Activated CD4-positive, alpha-beta T cell treated with anti-CD3 and anti-CD28 coated beads for 36 hours (primary cell): ENCODE measurements at regions of chr5 and their contacts with region 1.

Region 1: GRCh38 chr5:40879163-40879942 is 29.9 kb upstream of the C7 start:
- DNase-seq: no peak
- ATAC-seq: no peak
- H3K4me3 Mint-ChIP-seq: no peak overlapping the region
- H3K27ac Mint-ChIP-seq: no peak overlapping the region
- H3K4me1 Mint-ChIP-seq: peaks cover 6% of the 10 kb centered on the region
- H3K27me3 Mint-ChIP-seq: peaks cover under 1% of the 10 kb centered on the region

Region 2: GRCh38 chr5:39578887-39579497 is 1300.4 kb before region 1 on chr5:
- CTCF ChIA-PET with region 1: no interaction called
- POLR2A ChIA-PET with region 1: no interaction called
- intact Hi-C with region 1: loop called (anchors 2 kb)
- DNase-seq: no peak
- ATAC-seq: no peak
- H3K4me3 Mint-ChIP-seq: no peak overlapping the region
- H3K27ac Mint-ChIP-seq: no peak overlapping the region
- H3K4me1 Mint-ChIP-seq: peaks cover 8% of the 10 kb centered on the region
- H3K27me3 Mint-ChIP-seq: no peaks in the 10 kb centered on the region

Region 3: GRCh38 chr5:39714036-39714698 is 1165.2 kb before region 1 on chr5:
- CTCF ChIA-PET with region 1: interaction called, 5 read pairs
- POLR2A ChIA-PET with region 1: no interaction called
- intact Hi-C with region 1: loop called (anchors 1 kb)
- DNase-seq: peak; percentile 52
- ATAC-seq: peak; percentile 51
- H3K4me3 Mint-ChIP-seq: no peak overlapping the region
- H3K27ac Mint-ChIP-seq: no peak overlapping the region
- H3K4me1 Mint-ChIP-seq: no peaks in the 10 kb centered on the region
- H3K27me3 Mint-ChIP-seq: peaks cover 8% of the 10 kb centered on the region

Region 4: DNA sequence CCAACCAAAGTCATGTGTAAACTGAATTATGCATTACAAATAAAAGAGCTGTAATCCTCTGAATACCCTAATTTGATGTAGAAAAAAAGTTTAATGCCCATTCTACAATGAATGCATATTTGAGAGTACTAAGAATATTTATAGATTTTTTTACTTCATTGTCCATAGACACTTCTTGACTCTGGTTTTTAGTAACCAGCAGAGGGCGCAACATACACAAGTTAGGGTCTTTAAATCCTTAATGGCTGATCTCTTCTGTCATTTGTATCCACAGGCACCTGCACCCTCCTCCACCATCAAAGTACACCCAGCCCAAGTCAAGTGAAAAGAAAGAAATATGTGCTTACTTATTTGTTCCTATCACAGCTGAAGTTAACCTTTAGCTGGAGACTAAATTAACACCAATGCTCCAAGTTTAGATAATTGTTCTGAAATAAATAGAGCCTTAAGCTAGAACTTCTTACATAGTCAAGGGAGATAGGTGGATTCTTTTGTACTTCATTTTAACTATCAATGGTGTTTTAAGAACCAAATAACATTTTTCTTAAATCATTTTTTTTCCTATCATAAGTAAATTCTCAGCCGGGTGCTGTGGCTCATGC is 930.4 kb before region 1 on chr5:
- CTCF ChIA-PET with region 1: no interaction called
- POLR2A ChIA-PET with region 1: no interaction called
- intact Hi-C with region 1: loop called in 1 of 2 experiments (anchors 1 kb)
- DNase-seq: peak; percentile 70
- ATAC-seq: peak; percentile 97
- H3K4me3 Mint-ChIP-seq: no peak overlapping the region
- H3K27ac Mint-ChIP-seq: no peak overlapping the region
- H3K4me1 Mint-ChIP-seq: peaks cover 5% of the 10 kb centered on the region
- H3K27me3 Mint-ChIP-seq: no peaks in the 10 kb centered on the region

Region 5: DNA sequence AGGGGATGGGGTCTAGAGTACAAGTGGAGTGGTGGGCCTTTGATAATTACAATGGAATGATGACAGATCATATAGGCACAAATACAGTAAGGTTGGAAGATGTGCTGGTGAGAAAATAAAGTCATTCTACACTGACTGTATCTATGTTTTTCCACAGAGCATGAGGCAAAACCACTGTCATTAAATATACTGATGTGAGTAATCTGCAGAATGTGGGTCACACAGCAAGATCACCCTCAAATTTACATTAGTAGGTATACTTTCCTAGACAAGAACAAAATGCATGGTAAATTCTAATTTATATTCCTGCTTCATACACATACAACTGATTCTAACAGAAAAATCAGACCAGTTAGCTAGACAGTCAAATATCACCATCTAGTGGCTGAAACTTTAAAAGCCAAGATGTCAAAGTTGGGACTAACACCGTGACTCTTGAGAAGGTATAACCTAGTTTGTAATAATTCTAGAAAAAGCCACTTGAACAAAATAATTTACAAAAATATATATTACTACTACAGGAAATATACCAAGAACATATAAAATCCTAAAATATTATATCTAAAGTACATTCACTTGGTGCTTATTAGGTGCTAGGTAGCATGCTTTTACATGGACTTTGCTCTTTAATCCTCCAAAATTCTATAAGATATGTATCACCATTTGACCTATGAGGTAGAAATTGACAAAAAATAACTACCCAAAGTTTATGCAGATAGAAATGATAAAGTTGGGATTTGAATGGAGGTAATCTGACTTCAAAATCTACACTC is 143.1 kb before region 1 on chr5:
- CTCF ChIA-PET with region 1: interaction called, 3 read pairs
- POLR2A ChIA-PET with region 1: no interaction called
- intact Hi-C with region 1: loop called in 1 of 2 experiments (anchors 5 kb)
- DNase-seq: no peak
- ATAC-seq: peak; percentile 72
- H3K4me3 Mint-ChIP-seq: no peak overlapping the region
- H3K27ac Mint-ChIP-seq: peak overlapping the region; percentile 69
- H3K4me1 Mint-ChIP-seq: peaks cover 22% of the 10 kb centered on the region
- H3K27me3 Mint-ChIP-seq: no peaks in the 10 kb centered on the region

Region 6: GRCh38 chr5:40755407-40756365 is 123.7 kb before region 1 on chr5 and contains the start of gene TTC33:
- CTCF ChIA-PET with region 1: interaction called, 4 read pairs
- POLR2A ChIA-PET with region 1: no interaction called
- intact Hi-C with region 1: loop called (anchors 1 kb)
- DNase-seq: peak; percentile 99
- ATAC-seq: peak; percentile 90
- H3K4me3 Mint-ChIP-seq: no peak within 1 kb of the TSS
- H3K27ac Mint-ChIP-seq: no peak within 1 kb of the TSS
- H3K4me1 Mint-ChIP-seq: peaks cover 21% of the 10 kb centered on the region
- H3K27me3 Mint-ChIP-seq: no peaks in the 10 kb centered on the region
- total RNA-seq, gene TTC33: 31.4 to 31.7 TPM

Region 7: GRCh38 chr5:40798012-40798855 is 81.1 kb before region 1 on chr5 and contains the start of gene PRKAA1:
- CTCF ChIA-PET with region 1: no interaction called
- POLR2A ChIA-PET with region 1: no interaction called
- intact Hi-C with region 1: loop called in 1 of 2 experiments (anchors 1 kb)
- DNase-seq: peak; percentile 93
- ATAC-seq: peak; percentile 94
- H3K4me3 Mint-ChIP-seq: peak within 1 kb of the TSS; percentile 82
- H3K27ac Mint-ChIP-seq: peak within 1 kb of the TSS; percentile 78
- H3K4me1 Mint-ChIP-seq: peaks cover 35% of the 10 kb centered on the region
- H3K27me3 Mint-ChIP-seq: peaks cover 2% of the 10 kb centered on the region
- total RNA-seq, gene PRKAA1: 46.9 to 63.9 TPM

Region 8: DNA sequence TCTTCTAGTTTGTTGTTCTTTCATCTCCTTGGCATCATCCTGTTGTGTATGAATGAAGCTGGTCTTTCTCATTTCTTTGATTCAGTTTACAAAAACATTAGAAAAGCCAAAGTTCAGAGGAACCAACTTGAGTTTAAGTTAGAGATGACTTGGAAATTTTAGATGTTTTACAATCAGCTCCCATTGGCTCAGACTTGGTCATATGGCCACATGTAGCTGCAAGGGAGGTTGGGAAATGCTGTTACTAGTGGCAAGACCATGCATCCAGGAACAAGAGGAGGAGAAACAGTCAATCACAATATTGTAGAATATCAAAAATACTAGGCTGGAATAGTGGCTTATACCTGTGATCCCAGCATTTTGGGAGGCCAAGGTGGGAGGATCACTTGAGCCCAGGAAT is 18.6 kb before region 1 on chr5:
- CTCF ChIA-PET with region 1: no interaction called
- POLR2A ChIA-PET with region 1: no interaction called
- intact Hi-C with region 1: no loop called
- DNase-seq: no peak
- ATAC-seq: no peak
- H3K4me3 Mint-ChIP-seq: no peak overlapping the region
- H3K27ac Mint-ChIP-seq: no peak overlapping the region
- H3K4me1 Mint-ChIP-seq: no peaks in the 10 kb centered on the region
- H3K27me3 Mint-ChIP-seq: no peaks in the 10 kb centered on the region

Region 9: GRCh38 chr5:40928886-40929448 is 49.6 kb after region 1 on chr5:
- CTCF ChIA-PET with region 1: no interaction called
- POLR2A ChIA-PET with region 1: no interaction called
- intact Hi-C with region 1: no loop called
- DNase-seq: no peak
- ATAC-seq: no peak
- H3K4me3 Mint-ChIP-seq: no peak overlapping the region
- H3K27ac Mint-ChIP-seq: no peak overlapping the region
- H3K4me1 Mint-ChIP-seq: no peaks in the 10 kb centered on the region
- H3K27me3 Mint-ChIP-seq: peaks cover 7% of the 10 kb centered on the region